SK-N-SH (cell line): ENCODE measurements at regions of chr1 and their contacts with region 1.

Region 1: DNA sequence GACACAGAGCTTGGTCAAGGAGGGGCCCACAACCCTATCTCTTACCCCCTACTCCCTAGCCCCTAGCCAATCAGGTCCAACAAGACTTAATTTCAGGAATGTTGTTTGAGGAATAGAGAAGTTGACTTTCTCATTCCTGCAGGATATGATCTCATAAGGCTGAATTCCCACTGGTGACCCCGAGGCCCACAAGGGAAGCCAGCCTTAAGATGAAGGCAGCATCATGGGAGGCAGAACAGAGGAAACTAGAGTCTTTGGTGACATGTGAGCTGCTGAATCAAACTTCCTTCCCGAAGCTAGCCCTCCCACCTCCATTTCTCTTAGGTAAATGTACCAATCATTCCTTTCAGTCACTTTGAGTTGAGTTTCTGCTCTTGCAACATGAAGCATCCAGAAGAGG is 9.1 kb upstream of the PDIK1L start:
- DNase-seq: no peak
- H3K4me3 ChIP-seq: no peak overlapping the region
- H3K27ac ChIP-seq: no peak overlapping the region
- H3K4me1 ChIP-seq: no peaks in the 10 kb centered on the region
- H3K27me3 ChIP-seq: no peaks in the 10 kb centered on the region
- CTCF ChIP-seq: no peak
- EP300 ChIP-seq: no peak
- RAD21 ChIP-seq: no peak

Region 2: GRCh38 chr1:26092450-26092849 is 10.1 kb before region 1 on chr1:
- CTCF ChIA-PET with region 1: interaction called, 10 read pairs
- POLR2A ChIA-PET with region 1: no interaction called
- DNase-seq: no peak
- H3K4me3 ChIP-seq: no peak overlapping the region
- H3K27ac ChIP-seq: no peak overlapping the region
- H3K4me1 ChIP-seq: peaks cover 0 to 12% of the 10 kb centered on the region in 2 experiments; a peak in 1 of 4 replicates
- H3K27me3 ChIP-seq: no peaks in the 10 kb centered on the region; the same call in 1 of the 2 replicates
- CTCF ChIP-seq: no peak
- EP300 ChIP-seq: no peak
- RAD21 ChIP-seq: no peak